ENCODE measurements at regions of chr3 and their contacts with region 1.

Region 1: DNA sequence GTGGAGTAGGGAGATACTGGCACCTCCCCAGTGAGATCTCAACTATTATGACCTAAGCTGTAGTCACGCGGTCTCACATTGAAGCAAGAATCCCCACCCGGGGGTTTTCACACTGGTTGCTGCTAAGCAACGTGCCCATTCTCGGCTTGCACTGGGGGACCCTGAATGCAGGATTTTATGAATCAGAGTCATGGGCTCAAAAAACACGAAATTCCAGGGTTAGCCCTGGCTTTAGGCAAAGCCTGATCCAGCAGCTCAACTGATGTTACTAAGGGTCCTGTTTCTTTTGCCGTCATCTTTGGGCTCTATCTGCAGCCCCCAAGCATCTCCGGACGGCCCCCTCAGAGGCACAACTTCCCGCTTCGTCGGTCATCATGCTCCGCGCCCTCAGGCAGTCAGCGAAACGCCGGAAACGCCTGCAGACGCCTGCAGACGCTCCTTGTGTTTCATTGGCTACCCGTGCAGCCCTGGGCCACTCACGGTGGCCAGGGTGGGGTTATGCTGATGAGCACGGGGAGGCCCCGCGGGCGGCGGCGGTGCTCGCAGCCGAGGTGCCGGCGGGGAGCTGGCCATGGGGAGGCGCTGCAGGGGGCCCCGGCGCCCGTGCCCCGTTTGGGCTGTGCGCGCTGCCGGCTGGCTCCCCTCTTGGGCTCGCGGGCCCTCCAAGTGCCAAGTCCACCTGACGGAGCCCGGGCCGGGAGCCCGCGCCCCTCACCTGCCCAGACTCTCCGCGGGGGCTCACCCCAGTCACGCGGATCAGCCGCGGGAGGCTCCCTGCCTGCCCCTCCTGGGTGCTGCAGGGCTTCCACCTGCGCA is 25.8 kb downstream of the EFCC1 start:
- DNase-seq: peak; percentile 90 to 96
- ATAC-seq: peak; percentile 93 to 99 (median 95)
- H3K4me3 ChIP-seq: peak overlapping the region; percentile 52
- H3K4me3 Mint-ChIP-seq: peak overlapping the region; percentile 87
- H3K27ac ChIP-seq: peak overlapping the region; percentile 74
- H3K27ac Mint-ChIP-seq: peak overlapping the region; percentile 99 to 100
- H3K4me1 ChIP-seq: peaks cover 32% of the 10 kb centered on the region
- H3K4me1 Mint-ChIP-seq: peaks cover 25 to 35% of the 10 kb centered on the region in 2 donors
- H3K27me3 ChIP-seq: no peaks in the 10 kb centered on the region
- H3K27me3 Mint-ChIP-seq: no peaks in the 10 kb centered on the region
- CTCF ChIP-seq: peak; percentile 88

Region 2: DNA sequence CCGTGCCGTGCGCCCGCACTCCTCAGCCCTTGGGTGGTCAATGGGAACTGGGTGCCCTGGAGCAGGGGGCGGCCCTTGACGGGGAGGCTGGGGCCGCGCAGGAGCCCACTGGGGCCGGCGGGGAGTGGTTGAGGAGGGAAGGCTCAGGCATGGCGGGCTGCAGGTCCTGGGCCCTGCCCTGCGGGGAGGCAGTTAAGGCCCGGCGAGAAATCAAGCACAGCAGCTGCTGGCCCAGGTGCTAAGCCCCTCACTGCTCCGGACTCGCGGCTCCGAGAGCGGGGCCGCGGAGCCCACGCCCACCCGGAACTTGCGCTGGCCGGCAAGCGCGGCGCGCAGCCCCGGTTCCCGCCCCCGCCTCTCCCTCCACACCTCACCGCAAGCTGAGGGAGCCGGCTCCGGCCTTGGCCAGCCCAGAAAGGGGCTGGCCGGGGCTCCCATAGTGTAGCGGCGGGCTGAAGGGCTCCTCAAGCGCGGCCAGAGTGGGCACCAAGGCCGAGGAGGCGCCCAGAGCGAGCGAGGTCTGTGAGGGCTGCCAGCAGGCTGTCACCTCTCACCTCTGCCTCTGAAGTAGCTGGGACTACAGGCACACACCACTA is 41.5 kb after region 1 on chr3:
- intact Hi-C with region 1: loop called (anchors 5 kb)
- DNase-seq: no peak
- ATAC-seq: peak; percentile 33 to 48 (median 46)
- H3K4me3 ChIP-seq: peak overlapping the region; percentile 23
- H3K4me3 Mint-ChIP-seq: peak overlapping the region; percentile 55
- H3K27ac ChIP-seq: peak overlapping the region; percentile 63
- H3K27ac Mint-ChIP-seq: peak overlapping the region; percentile 91 to 94
- H3K4me1 ChIP-seq: peaks cover 46% of the 10 kb centered on the region
- H3K4me1 Mint-ChIP-seq: peaks cover 28 to 39% of the 10 kb centered on the region in 2 donors
- H3K27me3 ChIP-seq: no peaks in the 10 kb centered on the region
- H3K27me3 Mint-ChIP-seq: no peaks in the 10 kb centered on the region
- CTCF ChIP-seq: no peak

Region 3: GRCh38 chr3:129424185-129424841 is 397.4 kb after region 1 on chr3:
- intact Hi-C with region 1: no loop called
- DNase-seq: no peak
- ATAC-seq: no peak
- H3K4me3 ChIP-seq: no peak overlapping the region
- H3K4me3 Mint-ChIP-seq: no peak overlapping the region
- H3K27ac ChIP-seq: no peak overlapping the region
- H3K27ac Mint-ChIP-seq: no peak overlapping the region
- H3K4me1 ChIP-seq: peaks cover 17% of the 10 kb centered on the region
- H3K4me1 Mint-ChIP-seq: peaks cover 18 to 21% of the 10 kb centered on the region in 2 donors
- H3K27me3 ChIP-seq: no peaks in the 10 kb centered on the region
- H3K27me3 Mint-ChIP-seq: peaks cover 0 to 3% of the 10 kb centered on the region in 2 donors
- CTCF ChIP-seq: no peak